Right cardiac atrium (tissue), 5 donors: ENCODE measurements at regions of chr18 and their contacts with region 1.

Region 1: GRCh38 chr18:5841518-5841917 is 53.8 kb downstream of the TMEM200C start:
- DNase-seq: no peak
- ATAC-seq: no peak
- H3K4me3 ChIP-seq: no peak overlapping the region
- H3K27ac ChIP-seq: no peak overlapping the region
- H3K4me1 ChIP-seq: no peaks in the 10 kb centered on the region
- H3K27me3 ChIP-seq: no peaks in the 10 kb centered on the region

Region 2: GRCh38 chr18:5073026-5073944 is 768.2 kb before region 1 on chr18:
- intact Hi-C with region 1: loop called in 1 of 4 experiments (anchors 5 kb)
- DNase-seq: no peak
- ATAC-seq: peak; percentile 64 to 75
- H3K4me3 ChIP-seq: no peak overlapping the region
- H3K27ac ChIP-seq: no peak overlapping the region
- H3K4me1 ChIP-seq: no peaks in the 10 kb centered on the region
- H3K27me3 ChIP-seq: no peaks in the 10 kb centered on the region

Region 3: DNA sequence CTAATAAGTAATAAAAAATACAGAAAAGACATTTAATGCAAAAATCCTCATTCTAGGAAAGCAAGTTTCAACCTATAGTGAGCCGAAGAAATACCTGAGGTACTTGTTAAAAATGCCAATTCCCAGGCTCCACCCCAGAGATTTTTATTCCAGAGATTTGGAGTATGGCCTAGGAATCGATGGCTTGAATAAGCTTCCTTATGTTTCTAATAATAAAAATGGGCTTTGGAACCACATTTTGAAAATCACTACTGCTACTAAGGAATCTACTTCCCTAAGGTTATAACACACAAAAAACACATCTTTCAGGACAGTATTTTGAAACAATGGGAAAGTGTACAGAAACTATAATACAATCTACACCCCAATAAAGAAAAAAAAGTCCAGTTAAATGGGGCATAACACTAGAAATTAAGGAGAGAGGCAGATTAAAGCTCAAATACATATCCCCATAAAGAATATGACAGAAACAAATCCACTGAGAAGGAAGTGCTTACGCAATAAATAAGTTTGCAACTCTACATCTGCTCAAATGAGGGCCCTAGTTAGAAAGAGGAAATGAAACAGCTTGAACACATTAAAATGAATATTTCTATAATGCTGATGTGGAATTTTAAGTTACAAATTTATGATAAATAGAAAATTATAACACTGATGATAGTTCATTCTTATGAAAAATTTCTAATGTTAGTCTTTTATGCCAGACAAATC is 401.4 kb before region 1 on chr18:
- intact Hi-C with region 1: no loop called
- DNase-seq: no peak
- ATAC-seq: no peak
- H3K4me3 ChIP-seq: no peak overlapping the region
- H3K27ac ChIP-seq: no peak overlapping the region
- H3K4me1 ChIP-seq: no peaks in the 10 kb centered on the region
- H3K27me3 ChIP-seq: no peaks in the 10 kb centered on the region

Region 4: GRCh38 chr18:5600378-5601071 is 241.0 kb before region 1 on chr18:
- intact Hi-C with region 1: loop called in 3 of 4 experiments (anchors 5 to 10 kb)
- DNase-seq: no peak
- ATAC-seq: no peak
- H3K4me3 ChIP-seq: no peak overlapping the region
- H3K27ac ChIP-seq: no peak overlapping the region
- H3K4me1 ChIP-seq: peaks cover 2% of the 10 kb centered on the region
- H3K27me3 ChIP-seq: no peaks in the 10 kb centered on the region